Endothelial cell of umbilical vein (primary cell): ENCODE measurements at regions of chr7 and their contacts with region 1.

Region 1: GRCh38 chr7:130982160-130982638 is 248.2 kb upstream of the KLF14 start:
- DNase-seq: peak; percentile 54
- H3K4me3 ChIP-seq: no peak overlapping the region
- H3K27ac ChIP-seq: no peak overlapping the region
- H3K4me1 ChIP-seq: no peaks in the 10 kb centered on the region
- H3K27me3 ChIP-seq: no peaks in the 10 kb centered on the region
- CTCF ChIP-seq: peak; percentile 48 to 62
- POLR2A ChIP-seq: no peak

Region 2: GRCh38 chr7:130875265-130875741 is 106.9 kb before region 1 on chr7:
- CTCF ChIA-PET with region 1: no interaction called
- POLR2A ChIA-PET with region 1: no interaction called
- dilution Hi-C with region 1: no loop called
- intact Hi-C with region 1: no loop called
- DNase-seq: peak; percentile 40
- H3K4me3 ChIP-seq: no peak overlapping the region
- H3K27ac ChIP-seq: no peak overlapping the region
- H3K4me1 ChIP-seq: peaks cover 5% of the 10 kb centered on the region
- H3K27me3 ChIP-seq: no peaks in the 10 kb centered on the region
- CTCF ChIP-seq: peak; percentile 58 to 84
- POLR2A ChIP-seq: peak; percentile 35

Region 3: GRCh38 chr7:130912862-130913631 is 69.2 kb before region 1 on chr7:
- CTCF ChIA-PET with region 1: interaction called, 12 read pairs
- POLR2A ChIA-PET with region 1: interaction called, 5 read pairs
- dilution Hi-C with region 1: no loop called
- intact Hi-C with region 1: no loop called
- DNase-seq: peak; percentile 97
- H3K4me3 ChIP-seq: peak overlapping the region; percentile 51 to 99 (median 88)
- H3K27ac ChIP-seq: peak overlapping the region; percentile 100
- H3K4me1 ChIP-seq: peaks cover 60% of the 10 kb centered on the region
- H3K27me3 ChIP-seq: no peaks in the 10 kb centered on the region
- CTCF ChIP-seq: no peak
- POLR2A ChIP-seq: peak; percentile 48

Region 4: DNA sequence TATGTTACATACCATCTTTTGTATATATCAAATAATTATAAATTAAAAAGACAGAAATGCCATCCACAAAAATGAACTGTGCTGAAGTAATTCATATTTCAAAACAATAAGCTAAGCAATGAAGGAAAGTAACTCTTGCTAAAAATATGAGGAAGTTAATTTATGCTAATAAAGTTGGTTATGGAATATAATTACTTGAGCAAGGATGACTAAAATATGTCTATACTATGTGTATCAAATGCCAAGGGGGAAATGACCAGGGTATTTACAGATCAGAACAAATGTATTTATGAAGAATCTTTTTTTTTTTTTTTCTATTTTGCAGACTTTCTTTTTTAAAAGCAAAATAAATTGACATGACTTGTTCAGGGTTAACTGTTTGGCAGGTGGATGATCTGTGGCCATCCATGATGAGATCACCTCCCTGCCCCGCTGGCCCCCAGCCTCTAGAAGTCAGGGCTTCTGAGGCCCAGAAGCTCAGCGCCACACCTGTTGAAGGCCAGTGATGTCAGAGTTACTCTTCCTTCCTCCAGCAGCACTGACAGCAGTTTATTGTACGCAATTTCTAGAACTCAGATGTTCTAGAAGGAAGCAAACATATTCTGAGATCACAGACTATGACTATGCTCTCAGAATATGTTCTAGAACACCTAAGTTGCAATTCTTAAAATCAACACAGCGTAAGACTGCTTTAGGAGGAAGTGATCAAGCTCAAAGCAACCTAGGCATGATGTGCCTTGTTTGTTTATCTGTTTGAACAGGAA is 52.1 kb before region 1 on chr7:
- CTCF ChIA-PET with region 1: interaction called, 14 read pairs
- POLR2A ChIA-PET with region 1: no interaction called
- dilution Hi-C with region 1: no loop called
- intact Hi-C with region 1: no loop called
- DNase-seq: no peak
- H3K4me3 ChIP-seq: no peak overlapping the region
- H3K27ac ChIP-seq: no peak overlapping the region
- H3K4me1 ChIP-seq: peaks cover 6% of the 10 kb centered on the region
- H3K27me3 ChIP-seq: no peaks in the 10 kb centered on the region
- CTCF ChIP-seq: no peak
- POLR2A ChIP-seq: no peak

Region 5: GRCh38 chr7:130970696-130971095 is 11.5 kb before region 1 on chr7:
- CTCF ChIA-PET with region 1: interaction called, 24 read pairs
- POLR2A ChIA-PET with region 1: no interaction called
- dilution Hi-C with region 1: no loop called
- intact Hi-C with region 1: no loop called
- DNase-seq: peak; percentile 58
- H3K4me3 ChIP-seq: no peak overlapping the region
- H3K27ac ChIP-seq: no peak overlapping the region
- H3K4me1 ChIP-seq: no peaks in the 10 kb centered on the region
- H3K27me3 ChIP-seq: no peaks in the 10 kb centered on the region
- CTCF ChIP-seq: no peak
- POLR2A ChIP-seq: no peak

Region 6: DNA sequence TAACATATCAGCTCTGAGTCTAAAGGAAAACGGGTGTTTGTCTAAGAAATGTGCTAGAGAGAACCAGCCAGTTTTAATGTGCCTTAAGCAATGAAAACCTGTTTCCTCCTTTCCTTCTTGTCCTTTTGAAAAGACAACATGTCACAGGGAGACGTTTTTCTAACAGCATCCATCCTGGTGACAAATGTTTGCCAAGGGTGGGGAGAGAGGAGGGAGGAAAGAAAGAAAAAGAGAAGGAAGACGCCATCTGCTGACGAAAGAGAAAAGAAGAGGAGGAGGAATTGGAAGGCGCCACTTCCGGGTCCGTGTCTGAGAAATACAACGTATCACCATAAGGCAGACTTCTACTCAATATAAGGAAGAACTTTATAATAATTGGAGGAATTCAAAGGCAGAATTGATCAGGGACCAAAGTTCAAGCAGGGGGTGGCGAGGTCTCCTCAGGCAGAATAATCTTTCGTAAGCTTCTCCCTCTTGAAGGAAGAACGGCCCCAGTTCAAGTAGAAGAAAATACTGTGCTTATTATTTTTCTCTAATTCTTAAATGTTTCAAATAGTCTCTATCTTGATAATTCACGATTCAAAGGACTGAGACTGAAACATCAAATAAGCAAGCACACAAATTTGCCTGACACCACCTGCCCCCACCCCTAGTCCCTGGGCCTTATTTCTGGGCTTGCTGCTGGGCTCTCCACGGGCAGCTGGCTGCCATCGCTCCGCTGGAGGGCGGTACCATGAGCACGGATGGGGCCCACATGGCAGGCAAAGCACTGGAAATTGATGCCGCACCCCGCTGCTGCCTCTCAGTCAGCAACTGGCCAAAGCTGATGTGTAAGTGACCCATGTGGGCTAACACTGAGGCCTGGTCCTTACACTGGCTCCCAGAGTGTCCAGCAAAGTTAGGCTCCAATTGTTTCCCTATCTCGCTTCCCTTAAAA is 25.5 kb after region 1 on chr7:
- CTCF ChIA-PET with region 1: interaction called, 11 read pairs
- POLR2A ChIA-PET with region 1: no interaction called
- dilution Hi-C with region 1: no loop called
- intact Hi-C with region 1: loop called (anchors 1 kb)
- DNase-seq: peak; percentile 71
- H3K4me3 ChIP-seq: no peak overlapping the region
- H3K27ac ChIP-seq: peak overlapping the region; percentile 24
- H3K4me1 ChIP-seq: peaks cover 6% of the 10 kb centered on the region
- H3K27me3 ChIP-seq: no peaks in the 10 kb centered on the region
- CTCF ChIP-seq: peak; percentile 47 to 49
- POLR2A ChIP-seq: no peak